Activated CD8-positive, alpha-beta T cell treated with anti-CD3 and anti-CD28 coated beads for 36 hours (primary cell): ENCODE measurements at regions of chr3 and their contacts with region 1.

Region 1: DNA sequence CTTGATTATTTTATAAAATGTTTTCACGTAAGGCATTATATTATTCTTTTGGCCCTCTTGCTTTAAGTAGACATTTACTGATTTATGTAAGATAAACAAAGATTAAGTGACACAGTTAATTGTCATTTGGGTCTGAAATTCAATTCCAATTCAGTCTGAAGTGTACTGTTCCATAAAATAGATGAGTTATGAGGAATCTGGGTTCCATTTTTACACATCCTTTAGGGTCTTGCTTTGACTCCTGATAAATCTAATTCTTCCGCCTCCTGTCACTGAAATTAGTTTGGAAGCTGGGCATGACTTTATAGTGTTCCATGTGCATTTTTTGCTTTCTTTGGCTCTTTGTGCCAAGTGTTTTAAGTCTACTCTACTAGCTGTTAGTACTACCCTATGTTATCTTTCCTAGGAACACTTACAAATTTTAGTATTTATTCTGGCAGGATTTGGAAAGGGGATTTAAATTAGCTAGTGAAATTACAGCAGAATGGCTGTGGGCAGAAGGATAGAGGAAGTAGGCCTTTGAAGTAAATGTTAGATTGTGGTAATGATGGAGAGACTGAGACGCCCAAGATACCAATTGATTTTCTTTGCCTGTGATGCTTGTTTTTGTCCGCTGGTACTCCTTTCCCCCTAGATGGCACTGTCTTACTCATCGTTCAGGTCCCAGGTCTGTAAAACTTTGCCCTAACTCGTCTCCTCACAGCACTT is 14.3 kb downstream of the ARL8B start:
- DNase-seq: peak; percentile 43
- ATAC-seq: peak; percentile 88
- H3K4me3 Mint-ChIP-seq: no peak overlapping the region
- H3K27ac Mint-ChIP-seq: peak overlapping the region; percentile 83
- H3K4me1 Mint-ChIP-seq: peaks cover 63% of the 10 kb centered on the region
- H3K27me3 Mint-ChIP-seq: no peaks in the 10 kb centered on the region
- CTCF ChIP-seq: peak; percentile 59

Region 2: GRCh38 chr3:5122030-5122740 is 14.2 kb before region 1 on chr3 and contains the start of gene ARL8B:
- CTCF ChIA-PET with region 1: interaction called, 18 read pairs
- POLR2A ChIA-PET with region 1: interaction called, 4 read pairs
- intact Hi-C with region 1: no loop called
- DNase-seq: peak; percentile 95
- ATAC-seq: peak; percentile 97
- H3K4me3 Mint-ChIP-seq: peak within 1 kb of the TSS; percentile 86
- H3K27ac Mint-ChIP-seq: peak within 1 kb of the TSS; percentile 92
- H3K4me1 Mint-ChIP-seq: peaks cover 41% of the 10 kb centered on the region
- H3K27me3 Mint-ChIP-seq: no peaks in the 10 kb centered on the region
- CTCF ChIP-seq: peak; percentile 95
- total RNA-seq, gene ARL8B: 33.9 to 38.9 TPM

Region 3: DNA sequence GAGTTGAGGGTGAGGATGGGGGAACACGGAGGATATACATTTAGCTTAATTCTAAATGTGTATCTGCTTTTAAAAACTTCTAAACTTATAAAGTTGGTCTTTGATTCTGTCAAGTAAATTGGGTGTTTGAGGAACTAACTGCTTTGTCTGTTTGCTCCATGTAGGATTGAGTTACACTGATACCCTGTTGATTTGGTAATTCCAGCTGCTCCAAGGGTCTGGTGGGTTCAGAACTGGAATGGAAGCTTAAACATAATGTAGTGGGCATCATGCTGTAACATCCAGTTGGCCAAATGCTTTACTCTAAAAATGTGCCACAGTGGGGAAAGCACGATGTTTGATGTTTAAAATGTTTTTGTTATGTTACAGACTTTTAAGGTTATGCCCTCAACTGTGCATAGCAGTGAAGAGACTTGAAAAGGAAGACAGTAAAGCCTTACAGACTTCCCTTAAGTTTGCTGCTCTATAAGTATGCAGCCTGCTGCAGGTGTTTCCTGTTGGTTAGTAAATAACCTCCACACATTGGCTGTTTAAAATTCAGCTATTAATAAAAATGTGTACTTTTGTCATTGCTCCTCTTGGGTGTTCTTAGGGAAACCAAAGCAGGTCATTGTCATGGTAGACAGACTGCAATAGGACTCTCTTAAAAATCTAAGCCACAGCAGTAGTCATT is 45.2 kb after region 1 on chr3:
- CTCF ChIA-PET with region 1: interaction called, 13 read pairs
- POLR2A ChIA-PET with region 1: interaction called, 3 read pairs
- intact Hi-C with region 1: no loop called
- DNase-seq: no peak
- ATAC-seq: no peak
- H3K4me3 Mint-ChIP-seq: no peak overlapping the region
- H3K27ac Mint-ChIP-seq: no peak overlapping the region
- H3K4me1 Mint-ChIP-seq: peaks cover 13% of the 10 kb centered on the region
- H3K27me3 Mint-ChIP-seq: no peaks in the 10 kb centered on the region
- CTCF ChIP-seq: no peak

Region 4: DNA sequence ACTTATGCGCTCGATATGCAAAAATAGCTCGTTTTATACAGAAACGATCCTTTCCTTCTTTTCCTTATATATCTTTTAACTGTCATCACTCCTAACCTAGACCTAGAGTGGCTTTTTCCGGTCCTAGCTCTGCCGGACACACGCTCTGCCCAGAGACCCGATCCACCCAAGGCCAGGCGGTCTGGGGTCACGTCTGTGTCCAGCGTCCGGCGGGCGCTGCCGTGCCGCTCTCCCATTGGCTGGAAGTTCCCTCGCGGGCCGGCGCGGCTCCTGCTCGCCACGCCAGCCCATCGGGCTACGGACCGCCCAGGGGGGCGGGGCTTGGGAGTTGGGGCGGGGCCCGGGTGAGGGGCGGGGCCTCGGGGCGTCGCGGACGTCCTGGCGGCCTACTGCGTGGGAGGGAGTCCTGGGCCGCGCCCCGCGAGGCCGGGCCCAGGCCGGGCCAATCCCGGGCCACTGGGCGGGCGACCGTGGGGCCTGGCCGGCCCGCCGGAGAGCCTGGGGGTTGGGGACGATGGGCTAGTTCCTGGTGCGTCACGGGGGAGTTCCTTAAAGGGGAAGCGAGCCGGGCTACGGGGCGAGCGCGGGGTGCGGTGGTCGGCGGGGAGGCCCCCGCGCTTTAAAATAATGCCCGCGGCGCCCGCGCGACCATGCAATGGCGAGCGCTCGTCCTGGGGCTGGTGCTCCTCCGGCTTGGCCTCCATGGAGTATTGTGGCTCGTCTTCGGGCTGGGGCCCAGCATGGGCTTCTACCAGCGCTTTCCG is 51.0 kb after region 1 on chr3 and contains the start of gene EDEM1:
- CTCF ChIA-PET with region 1: interaction called, 13 read pairs
- POLR2A ChIA-PET with region 1: interaction called, 6 read pairs
- intact Hi-C with region 1: loop called (anchors 5 kb)
- DNase-seq: peak; percentile 93
- ATAC-seq: peak; percentile 86
- H3K4me3 Mint-ChIP-seq: peak within 1 kb of the TSS; percentile 100
- H3K27ac Mint-ChIP-seq: peak within 1 kb of the TSS; percentile 94
- H3K4me1 Mint-ChIP-seq: peaks cover 21% of the 10 kb centered on the region
- H3K27me3 Mint-ChIP-seq: no peaks in the 10 kb centered on the region
- CTCF ChIP-seq: no peak
- total RNA-seq, gene EDEM1: 156 to 159 TPM

Region 5: GRCh38 chr3:5366746-5367145 is 230.4 kb after region 1 on chr3:
- CTCF ChIA-PET with region 1: no interaction called
- POLR2A ChIA-PET with region 1: no interaction called
- intact Hi-C with region 1: no loop called
- DNase-seq: no peak
- ATAC-seq: no peak
- H3K4me3 Mint-ChIP-seq: no peak overlapping the region
- H3K27ac Mint-ChIP-seq: no peak overlapping the region
- H3K4me1 Mint-ChIP-seq: no peaks in the 10 kb centered on the region
- H3K27me3 Mint-ChIP-seq: peaks cover 2% of the 10 kb centered on the region
- CTCF ChIP-seq: no peak

Region 6: DNA sequence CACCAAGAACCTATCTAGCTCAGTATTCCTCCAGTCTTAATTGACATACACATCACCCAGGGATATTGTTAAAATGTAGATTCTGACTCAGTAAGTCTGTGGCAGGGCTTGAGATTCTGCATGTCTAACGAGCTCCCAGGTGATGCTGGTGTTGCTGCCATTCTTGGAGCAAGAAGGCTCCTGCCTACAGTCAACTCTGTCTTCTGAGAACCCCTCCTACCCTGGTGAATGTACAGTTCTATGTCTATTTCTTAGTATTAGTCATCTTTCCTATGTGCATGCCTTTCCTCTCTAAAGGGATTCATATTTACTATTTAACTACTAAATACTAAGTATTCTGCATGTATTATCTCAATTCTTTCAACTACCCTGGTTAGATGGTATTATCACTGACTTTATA is 319.8 kb after region 1 on chr3:
- CTCF ChIA-PET with region 1: no interaction called
- POLR2A ChIA-PET with region 1: no interaction called
- intact Hi-C with region 1: no loop called
- DNase-seq: no peak
- ATAC-seq: no peak
- H3K4me3 Mint-ChIP-seq: no peak overlapping the region
- H3K27ac Mint-ChIP-seq: no peak overlapping the region
- H3K4me1 Mint-ChIP-seq: no peaks in the 10 kb centered on the region
- H3K27me3 Mint-ChIP-seq: peaks cover 8% of the 10 kb centered on the region
- CTCF ChIP-seq: no peak